GM10248 (cell line): ENCODE measurements at regions of chr20 and their contacts with region 1.

Region 1: DNA sequence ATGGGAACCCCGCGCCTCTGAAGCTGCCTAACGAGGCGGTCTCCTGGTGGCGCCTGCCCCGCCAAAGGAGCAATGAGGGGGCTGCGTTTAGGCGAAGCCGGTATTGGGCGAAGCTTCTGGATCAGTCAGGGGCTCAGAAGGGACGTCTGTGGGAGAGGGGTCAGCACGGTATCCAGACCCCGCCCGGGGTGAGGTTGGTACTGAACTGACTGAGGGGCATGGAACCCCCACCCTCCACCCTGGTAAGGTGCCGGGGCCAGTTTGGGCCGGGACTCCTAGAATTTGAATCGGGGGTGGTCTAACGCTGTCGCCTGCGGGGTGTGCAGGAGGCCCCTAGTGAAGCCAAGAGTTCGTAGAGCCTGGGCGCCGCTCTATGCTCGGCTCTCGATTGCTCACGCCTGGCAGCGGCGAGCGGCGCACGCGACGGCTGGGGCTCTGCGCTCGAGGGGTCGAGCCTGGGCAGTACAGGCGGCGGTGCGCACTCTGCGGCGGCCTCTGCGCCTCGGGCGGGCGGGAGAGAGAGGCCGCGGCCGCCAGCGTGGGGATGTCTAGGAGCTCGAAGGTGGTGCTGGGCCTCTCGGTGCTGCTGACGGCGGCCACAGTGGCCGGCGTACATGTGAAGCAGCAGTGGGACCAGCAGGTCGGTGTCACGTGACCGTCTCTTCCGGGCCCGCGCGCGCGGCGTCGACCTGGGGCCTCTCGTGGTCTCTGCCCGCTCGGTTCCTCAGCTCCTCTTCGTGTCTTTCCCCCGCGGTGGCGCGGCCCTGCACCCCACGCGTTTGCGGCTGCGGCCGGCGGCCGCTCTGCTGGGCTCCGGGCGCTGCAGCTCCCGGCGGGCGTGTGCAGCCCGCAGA is at the starts of genes KAT14 and PET117:
- DNase-seq: peak; percentile 90
- CTCF ChIP-seq: no peak

Region 2: DNA sequence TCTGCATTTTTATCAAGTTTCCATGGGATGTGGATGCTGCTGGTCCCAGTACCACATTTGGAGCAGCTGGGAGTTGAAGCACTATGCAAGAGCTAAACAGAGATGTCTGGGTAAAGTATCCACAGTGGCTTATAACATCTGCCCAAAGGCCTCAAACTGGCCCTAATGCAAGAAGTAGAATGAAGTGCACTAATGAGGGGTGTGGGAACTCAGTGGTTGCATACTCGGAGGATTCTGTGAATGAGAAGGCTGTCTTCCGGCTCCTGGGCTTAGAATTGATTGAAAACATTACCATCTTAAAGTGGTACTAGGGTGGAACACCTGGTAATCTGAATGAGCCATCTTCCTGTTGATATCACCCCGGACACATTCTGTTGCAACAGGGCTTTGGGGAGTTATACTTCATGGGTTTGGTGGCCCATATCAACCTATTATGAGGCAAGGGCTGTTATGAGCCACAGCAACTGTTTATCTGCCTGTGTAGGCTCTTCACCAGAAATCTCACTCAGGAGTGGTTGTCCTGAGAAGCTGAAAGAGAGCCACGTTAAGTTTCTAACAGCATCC is 1462.6 kb before region 1 on chr20:
- CTCF ChIA-PET with region 1: no interaction called
- POLR2A ChIA-PET with region 1: interaction called, 10 read pairs
- DNase-seq: no peak
- CTCF ChIP-seq: no peak

Region 3: DNA sequence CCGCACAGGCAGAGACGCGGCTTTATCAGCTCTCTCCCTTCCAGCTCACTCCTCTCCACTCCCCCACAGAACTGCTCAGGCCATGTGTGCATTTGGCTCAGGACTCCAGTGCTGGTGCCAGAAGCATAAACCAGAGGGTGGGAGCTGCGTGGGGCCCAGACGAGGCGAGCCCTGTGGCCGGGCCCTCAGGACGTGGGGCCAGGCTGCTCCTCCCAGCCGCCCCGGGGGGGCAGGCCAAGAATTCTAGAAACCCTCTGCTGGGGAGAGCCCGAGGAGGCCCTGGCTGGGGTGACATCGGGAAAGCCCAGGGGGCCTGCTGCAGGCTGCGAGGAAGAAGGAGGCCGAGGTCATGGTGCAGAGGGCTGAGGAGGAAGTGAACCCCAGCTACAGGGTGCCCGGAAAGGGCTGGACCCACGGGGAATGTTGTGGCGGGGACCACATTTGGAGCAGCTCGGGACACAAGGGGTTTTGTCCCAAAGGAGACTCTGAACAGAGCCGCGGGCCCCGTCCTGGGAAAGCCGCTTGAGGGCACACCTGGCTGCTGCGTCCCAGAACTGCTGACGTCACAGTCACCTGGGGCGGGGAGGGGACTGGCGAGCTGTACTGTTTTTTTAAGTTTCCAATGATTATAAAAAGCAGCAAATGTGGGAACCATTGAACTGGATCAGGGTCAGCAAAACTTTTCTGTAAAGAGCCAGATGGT is 330.7 kb before region 1 on chr20:
- CTCF ChIA-PET with region 1: no interaction called
- POLR2A ChIA-PET with region 1: no interaction called
- DNase-seq: no peak
- CTCF ChIP-seq: no peak